MCF 10A (cell line): ENCODE measurements at regions of chr2 and their contacts with region 1.

Region 1: GRCh38 chr2:234500394-234501006 is 3.6 kb upstream of the ARL4C start:
- DNase-seq: peak; percentile 67
- H3K4me3 Mint-ChIP-seq: no peak overlapping the region
- H3K27ac Mint-ChIP-seq: no peak overlapping the region
- H3K4me1 Mint-ChIP-seq: peaks cover 15% of the 10 kb centered on the region
- H3K27me3 Mint-ChIP-seq: no peaks in the 10 kb centered on the region
- CTCF ChIP-seq: peak; percentile 63

Region 2: GRCh38 chr2:233976690-233977294 is 523.7 kb before region 1 on chr2:
- CTCF ChIA-PET with region 1: interaction called, 20 read pairs
- POLR2A ChIA-PET with region 1: interaction called, 3 read pairs
- intact Hi-C with region 1: loop called (anchors 1 kb)
- DNase-seq: peak; percentile 75
- H3K4me3 Mint-ChIP-seq: no peak overlapping the region
- H3K27ac Mint-ChIP-seq: no peak overlapping the region
- H3K4me1 Mint-ChIP-seq: peaks cover 29% of the 10 kb centered on the region
- H3K27me3 Mint-ChIP-seq: no peaks in the 10 kb centered on the region
- CTCF ChIP-seq: peak; percentile 68

Region 3: GRCh38 chr2:234251326-234252271 is 248.9 kb before region 1 on chr2:
- CTCF ChIA-PET with region 1: interaction called, 4 read pairs
- POLR2A ChIA-PET with region 1: interaction called, 21 read pairs
- intact Hi-C with region 1: no loop called
- DNase-seq: peak; percentile 96
- H3K4me3 Mint-ChIP-seq: peak overlapping the region; percentile 40
- H3K27ac Mint-ChIP-seq: peak overlapping the region; percentile 94
- H3K4me1 Mint-ChIP-seq: peaks cover 38% of the 10 kb centered on the region
- H3K27me3 Mint-ChIP-seq: no peaks in the 10 kb centered on the region
- CTCF ChIP-seq: no peak

Region 4: DNA sequence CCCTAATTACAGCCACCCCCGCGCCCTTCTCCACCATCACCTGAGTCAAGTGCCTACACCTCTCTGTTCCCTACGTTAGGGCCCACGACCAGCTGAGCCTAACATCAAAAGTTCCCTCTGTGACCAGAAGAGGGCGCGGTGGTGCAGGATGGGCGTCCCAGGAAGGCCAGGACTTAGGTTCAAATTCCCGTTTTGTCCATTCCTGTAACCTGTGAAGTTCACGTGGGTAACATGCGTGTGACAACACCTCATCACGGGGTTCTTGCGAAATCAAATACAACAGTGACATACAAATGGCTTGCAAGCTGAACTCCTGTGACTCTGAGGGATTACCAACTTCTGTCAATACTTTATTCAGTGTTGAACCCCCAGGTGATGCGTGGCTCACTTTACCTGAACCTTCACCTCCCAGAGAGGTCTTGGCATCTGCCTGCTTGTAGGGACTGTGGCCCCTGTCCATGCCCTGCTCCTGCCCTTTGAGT is 211.5 kb before region 1 on chr2:
- CTCF ChIA-PET with region 1: interaction called, 4 read pairs
- POLR2A ChIA-PET with region 1: interaction called, 9 read pairs
- intact Hi-C with region 1: loop called (anchors 1 kb)
- DNase-seq: peak; percentile 77
- H3K4me3 Mint-ChIP-seq: no peak overlapping the region
- H3K27ac Mint-ChIP-seq: no peak overlapping the region
- H3K4me1 Mint-ChIP-seq: peaks cover 18% of the 10 kb centered on the region
- H3K27me3 Mint-ChIP-seq: no peaks in the 10 kb centered on the region
- CTCF ChIP-seq: peak; percentile 77

Region 5: DNA sequence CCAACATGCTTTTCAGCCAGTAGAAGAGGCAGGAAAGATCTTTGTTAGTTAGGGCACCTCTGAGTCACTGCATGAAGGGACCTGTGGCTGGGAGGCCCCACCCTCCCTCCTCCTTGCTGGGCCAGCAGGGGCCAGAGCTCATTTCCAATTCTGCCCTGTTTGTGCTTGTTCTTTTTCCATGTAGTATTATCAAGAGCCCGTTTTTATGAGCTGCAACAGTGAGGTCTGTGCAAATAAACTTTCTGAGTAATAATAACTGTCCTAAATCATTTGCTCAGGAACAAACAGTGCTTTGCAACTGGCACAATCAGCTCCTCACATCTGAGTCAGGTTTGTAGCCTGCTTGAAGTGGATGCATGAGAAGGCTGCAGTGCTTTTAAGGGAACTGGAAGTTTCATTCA is 131.6 kb before region 1 on chr2:
- CTCF ChIA-PET with region 1: interaction called, 3 read pairs
- POLR2A ChIA-PET with region 1: interaction called, 17 read pairs
- intact Hi-C with region 1: no loop called
- DNase-seq: peak; percentile 50
- H3K4me3 Mint-ChIP-seq: no peak overlapping the region
- H3K27ac Mint-ChIP-seq: peak overlapping the region; percentile 28
- H3K4me1 Mint-ChIP-seq: peaks cover 13% of the 10 kb centered on the region
- H3K27me3 Mint-ChIP-seq: no peaks in the 10 kb centered on the region
- CTCF ChIP-seq: no peak

Region 6: DNA sequence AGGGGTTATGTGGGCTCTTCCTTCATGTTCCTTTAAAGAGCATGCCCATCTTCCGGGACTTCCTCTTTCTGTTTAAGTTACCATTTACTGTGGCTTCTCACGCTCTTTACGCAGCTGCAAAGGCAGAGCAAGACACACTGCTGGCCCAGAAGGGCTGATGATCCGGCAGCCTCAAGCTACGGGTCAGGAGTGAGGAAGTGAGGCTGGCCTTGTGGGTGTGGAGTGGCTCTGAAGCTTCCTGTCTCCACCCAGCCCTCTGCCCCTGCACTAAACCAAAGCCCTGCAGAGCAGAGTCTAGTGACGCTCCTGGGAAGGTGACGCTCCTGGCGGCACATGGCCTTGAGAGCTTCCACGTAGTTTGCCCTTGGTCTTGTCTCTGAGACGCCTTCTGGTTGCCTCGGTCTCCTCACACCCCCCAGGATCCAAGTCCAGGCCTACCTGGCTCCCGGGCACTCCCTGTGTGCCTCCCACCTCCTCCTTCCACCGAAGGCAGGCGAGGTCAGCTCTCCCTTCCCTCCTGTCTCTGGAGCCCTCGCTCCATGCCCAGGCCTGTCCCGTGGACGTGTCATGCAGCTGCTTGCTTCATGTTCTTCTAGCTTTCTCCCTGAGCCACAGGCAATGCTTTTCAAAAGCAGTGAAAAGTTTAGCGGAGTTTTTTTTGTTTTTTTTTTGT is 54.0 kb before region 1 on chr2:
- CTCF ChIA-PET with region 1: interaction called, 4 read pairs
- POLR2A ChIA-PET with region 1: interaction called, 23 read pairs
- intact Hi-C with region 1: no loop called
- DNase-seq: peak; percentile 63
- H3K4me3 Mint-ChIP-seq: no peak overlapping the region
- H3K27ac Mint-ChIP-seq: peak overlapping the region; percentile 94
- H3K4me1 Mint-ChIP-seq: peaks cover 14% of the 10 kb centered on the region
- H3K27me3 Mint-ChIP-seq: no peaks in the 10 kb centered on the region
- CTCF ChIP-seq: no peak